ENCODE measurements at regions of chr15 and their contacts with region 1.

Region 1: DNA sequence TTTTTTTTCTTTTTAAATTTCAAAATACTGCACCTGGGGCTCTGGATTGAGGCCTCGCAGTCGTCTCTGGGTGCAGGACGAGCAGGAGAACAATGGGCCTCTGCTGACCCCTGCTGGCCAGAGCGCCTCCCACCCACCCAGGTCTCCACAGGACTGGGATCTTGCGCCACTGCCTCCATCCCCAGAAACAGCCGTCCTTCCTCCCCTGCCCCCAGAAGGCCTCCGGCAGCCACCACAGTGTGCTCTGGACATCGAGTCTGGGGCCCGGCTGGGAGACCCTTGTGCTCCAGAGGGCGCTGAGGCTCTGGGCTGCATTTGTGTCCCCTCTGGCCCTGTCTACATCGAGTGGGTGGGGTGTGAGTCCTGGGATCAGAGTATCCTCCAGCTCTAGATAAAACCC is 6.6 kb upstream of the ACSBG1 start:
- DNase-seq: peak; percentile 70 to 78 (median 73)
- H3K4me3 ChIP-seq: no peak overlapping the region
- H3K4me3 Mint-ChIP-seq: no peak overlapping the region
- H3K27ac ChIP-seq: no peak overlapping the region
- H3K27ac Mint-ChIP-seq: no peak overlapping the region
- H3K4me1 ChIP-seq: no peaks in the 10 kb centered on the region
- H3K4me1 Mint-ChIP-seq: peaks cover 0 to 2% (median 0%) of the 10 kb centered on the region in 4 donors
- H3K27me3 ChIP-seq: no peaks in the 10 kb centered on the region
- H3K27me3 Mint-ChIP-seq: peaks cover 3% of the 10 kb centered on the region in 2 donors

Region 2: GRCh38 chr15:77907824-77908751 is 332.9 kb before region 1 on chr15:
- CTCF ChIA-PET with region 1: interaction called, 27 read pairs
- POLR2A ChIA-PET with region 1: no interaction called
- intact Hi-C with region 1: loop called (anchors 1 kb)
- DNase-seq: peak in 3 of 5 donors; percentile 12 to 36 (median 18)
- H3K4me3 ChIP-seq: no peak overlapping the region
- H3K4me3 Mint-ChIP-seq: no peak overlapping the region
- H3K27ac ChIP-seq: no peak overlapping the region
- H3K27ac Mint-ChIP-seq: no peak overlapping the region
- H3K4me1 ChIP-seq: no peaks in the 10 kb centered on the region
- H3K4me1 Mint-ChIP-seq: no peaks in the 10 kb centered on the region
- H3K27me3 ChIP-seq: no peaks in the 10 kb centered on the region
- H3K27me3 Mint-ChIP-seq: peaks cover 2 to 4% of the 10 kb centered on the region in 2 donors

Region 3: GRCh38 chr15:77959432-77959879 is 281.6 kb before region 1 on chr15:
- CTCF ChIA-PET with region 1: interaction called, 35 read pairs
- POLR2A ChIA-PET with region 1: no interaction called
- intact Hi-C with region 1: loop called (anchors 1 kb)
- DNase-seq: peak; percentile 60 to 71 (median 67)
- H3K4me3 ChIP-seq: no peak overlapping the region
- H3K4me3 Mint-ChIP-seq: peak overlapping the region in 1 of 8 donors; percentile 56
- H3K27ac ChIP-seq: no peak overlapping the region
- H3K27ac Mint-ChIP-seq: no peak overlapping the region
- H3K4me1 ChIP-seq: no peaks in the 10 kb centered on the region
- H3K4me1 Mint-ChIP-seq: peaks cover 1 to 8% (median 6%) of the 10 kb centered on the region in 4 donors
- H3K27me3 ChIP-seq: no peaks in the 10 kb centered on the region
- H3K27me3 Mint-ChIP-seq: peaks cover 0 to 2% of the 10 kb centered on the region in 2 donors

Region 4: GRCh38 chr15:77966540-77967290 is 274.3 kb before region 1 on chr15:
- CTCF ChIA-PET with region 1: interaction called, 16 read pairs
- POLR2A ChIA-PET with region 1: no interaction called
- intact Hi-C with region 1: no loop called
- DNase-seq: peak in 4 of 5 donors; percentile 39 to 40 (median 39)
- H3K4me3 ChIP-seq: no peak overlapping the region
- H3K4me3 Mint-ChIP-seq: no peak overlapping the region
- H3K27ac ChIP-seq: no peak overlapping the region
- H3K27ac Mint-ChIP-seq: no peak overlapping the region
- H3K4me1 ChIP-seq: no peaks in the 10 kb centered on the region
- H3K4me1 Mint-ChIP-seq: peaks cover 0 to 4% (median 0%) of the 10 kb centered on the region in 4 donors
- H3K27me3 ChIP-seq: no peaks in the 10 kb centered on the region
- H3K27me3 Mint-ChIP-seq: no peaks in the 10 kb centered on the region

Region 5: GRCh38 chr15:78131295-78132061 is 109.5 kb before region 1 on chr15 and contains the start of gene CIB2:
- CTCF ChIA-PET with region 1: interaction called, 20 read pairs
- POLR2A ChIA-PET with region 1: no interaction called
- intact Hi-C with region 1: loop called (anchors 1 kb)
- DNase-seq: peak; percentile 72 to 82 (median 76)
- H3K4me3 ChIP-seq: peak within 1 kb of the TSS; percentile 81 to 88
- H3K4me3 Mint-ChIP-seq: peak within 1 kb of the TSS; percentile 79 to 93 (median 80)
- H3K27ac ChIP-seq: peak within 1 kb of the TSS; percentile 66
- H3K27ac Mint-ChIP-seq: peak within 1 kb of the TSS; percentile 79 to 95 (median 88)
- H3K4me1 ChIP-seq: peaks cover 12% of the 10 kb centered on the region
- H3K4me1 Mint-ChIP-seq: peaks cover 7 to 30% (median 20%) of the 10 kb centered on the region in 4 donors
- H3K27me3 ChIP-seq: no peaks in the 10 kb centered on the region
- H3K27me3 Mint-ChIP-seq: peaks cover 0 to 1% of the 10 kb centered on the region in 2 donors
- total RNA-seq, gene CIB2: 1.0 to 1.7 TPM